ENCODE measurements at regions of chr10 and their contacts with region 1.

Region 1: GRCh38 chr10:4512671-4513240 is 313.3 kb upstream of the AKR1E2 start:
- DNase-seq: peak; percentile 61
- ATAC-seq: peak; percentile 64

Region 2: DNA sequence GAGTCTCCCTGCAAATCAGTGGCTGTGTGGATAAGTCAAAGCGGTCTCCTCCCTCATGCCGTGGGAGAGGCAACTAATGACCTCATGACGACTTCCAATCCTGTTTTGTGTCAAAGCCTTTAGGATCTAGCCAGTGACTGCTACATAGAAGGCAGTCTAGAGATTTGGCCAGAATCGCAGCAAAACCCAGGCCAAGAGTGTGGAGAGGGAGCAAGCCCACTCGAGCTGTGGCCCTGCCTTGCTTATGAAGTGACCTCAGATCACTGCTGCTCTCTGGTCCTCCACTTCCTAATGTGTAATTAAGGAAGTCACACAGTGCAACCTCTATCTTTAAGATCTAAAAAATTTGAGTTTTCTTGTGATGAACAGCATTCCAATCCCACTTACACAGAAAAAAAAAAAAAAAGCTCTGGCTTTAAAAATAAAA is 431.1 kb before region 1 on chr10:
- intact Hi-C with region 1: loop called (anchors 5 kb)
- DNase-seq: no peak
- ATAC-seq: peak; percentile 71

Region 3: GRCh38 chr10:4656576-4657182 is 143.9 kb after region 1 on chr10:
- intact Hi-C with region 1: loop called (anchors 2 kb)
- DNase-seq: peak; percentile 68
- ATAC-seq: no peak

Measured in Right ventricle myocardium inferior (tissue), 1 donor.